B cell (primary cell): ENCODE measurements at regions of chr4 and their contacts with region 1.

Region 1: DNA sequence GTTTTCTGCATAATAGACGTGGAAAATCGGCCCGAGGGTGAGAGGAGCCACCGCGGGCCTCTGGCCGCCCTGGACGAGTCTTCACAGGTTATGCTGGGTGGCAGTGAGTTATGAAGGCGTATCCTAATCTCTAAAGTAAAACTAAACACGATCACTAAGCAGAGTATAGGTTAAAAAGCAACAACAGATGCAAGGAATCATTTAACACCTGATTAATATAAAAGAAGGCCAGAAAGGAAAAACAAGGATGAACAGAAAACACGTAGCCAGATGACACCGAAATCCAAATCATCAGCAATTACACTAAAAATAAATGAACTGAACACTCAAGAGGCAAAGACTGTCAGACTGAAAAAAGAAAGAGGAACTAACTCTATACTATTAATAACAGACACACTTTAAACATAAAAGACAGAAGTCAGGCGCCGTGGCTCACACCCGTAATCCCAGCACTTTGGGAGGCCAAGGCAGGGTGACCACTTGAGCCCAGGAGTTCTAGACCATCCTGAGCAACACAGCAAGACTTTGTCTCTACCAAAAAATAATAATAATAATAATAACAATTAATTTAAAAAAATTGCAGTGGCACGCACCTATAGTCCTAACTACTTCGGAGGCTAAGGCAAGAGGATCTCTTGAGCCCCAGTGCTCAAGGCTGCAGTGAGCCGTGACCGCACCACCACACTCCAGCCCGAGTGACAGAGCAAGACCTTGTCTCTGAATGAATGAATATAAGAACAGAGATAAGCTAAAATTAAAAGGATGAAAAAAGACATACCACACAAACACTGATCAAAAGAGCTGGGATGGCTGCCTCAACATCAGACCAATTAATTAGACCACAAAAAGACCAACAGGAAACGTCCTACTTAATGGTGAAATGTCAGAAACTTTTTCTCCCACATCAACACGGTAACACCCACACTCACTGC is 30.0 kb downstream of the CTBP1 start:
- DNase-seq: peak; percentile 68
- ATAC-seq: peak; percentile 83
- H3K4me3 ChIP-seq: peak overlapping the region in 4 of 5 experiments; percentile 23 to 60 (median 34)
- H3K4me3 Mint-ChIP-seq: peak overlapping the region; percentile 84
- H3K27ac ChIP-seq: peak overlapping the region; percentile 56 to 60
- H3K27ac Mint-ChIP-seq: peak overlapping the region; percentile 92
- H3K4me1 ChIP-seq: peaks cover 44 to 69% of the 10 kb centered on the region in 2 donors
- H3K4me1 Mint-ChIP-seq: peaks cover 62% of the 10 kb centered on the region
- H3K27me3 ChIP-seq: no peaks in the 10 kb centered on the region
- H3K27me3 Mint-ChIP-seq: no peaks in the 10 kb centered on the region
- CTCF ChIP-seq: no peak

Region 2: DNA sequence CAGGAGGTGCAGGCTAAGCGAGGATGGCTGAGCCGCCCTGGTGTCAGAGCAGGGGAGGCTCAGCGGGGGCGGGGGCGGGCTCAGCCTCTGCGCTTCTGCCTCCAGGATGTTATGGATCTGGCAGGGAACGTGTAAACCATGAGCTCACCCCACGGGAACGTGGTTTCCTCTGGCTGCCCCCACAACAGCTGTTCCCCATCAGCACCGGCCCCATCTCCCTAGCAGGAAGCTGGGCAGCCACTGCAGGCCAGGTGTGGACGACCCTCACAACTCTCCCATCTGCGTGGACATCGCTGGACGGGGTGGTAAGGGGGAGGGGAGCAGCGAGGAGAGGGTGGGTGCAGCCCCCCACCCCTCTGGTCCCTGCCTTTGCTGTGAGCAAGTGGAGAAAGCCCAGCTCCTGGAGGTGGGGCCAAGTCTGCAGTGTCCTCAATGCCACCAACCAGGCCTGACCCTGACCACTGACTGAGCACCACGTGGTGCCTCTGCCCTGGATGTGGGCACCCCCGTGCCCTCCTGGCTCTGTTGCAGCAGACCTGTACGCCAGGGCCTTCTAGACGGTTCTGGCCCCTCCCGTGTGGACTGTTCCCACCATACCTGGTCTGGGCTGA is 18.4 kb before region 1 on chr4:
- CTCF ChIA-PET with region 1: interaction called, 6 read pairs
- POLR2A ChIA-PET with region 1: no interaction called
- intact Hi-C with region 1: loop called (anchors 1 kb)
- DNase-seq: peak; percentile 22
- ATAC-seq: no peak
- H3K4me3 ChIP-seq: peak overlapping the region in 4 of 5 experiments; percentile 3 to 47 (median 32)
- H3K4me3 Mint-ChIP-seq: peak overlapping the region; percentile 86
- H3K27ac ChIP-seq: no peak overlapping the region
- H3K27ac Mint-ChIP-seq: no peak overlapping the region
- H3K4me1 ChIP-seq: peaks cover 32 to 51% of the 10 kb centered on the region in 2 donors
- H3K4me1 Mint-ChIP-seq: peaks cover 40% of the 10 kb centered on the region
- H3K27me3 ChIP-seq: peaks cover 0 to 4% (median 0%) of the 10 kb centered on the region in 4 experiments
- H3K27me3 Mint-ChIP-seq: no peaks in the 10 kb centered on the region
- CTCF ChIP-seq: no peak

Region 3: DNA sequence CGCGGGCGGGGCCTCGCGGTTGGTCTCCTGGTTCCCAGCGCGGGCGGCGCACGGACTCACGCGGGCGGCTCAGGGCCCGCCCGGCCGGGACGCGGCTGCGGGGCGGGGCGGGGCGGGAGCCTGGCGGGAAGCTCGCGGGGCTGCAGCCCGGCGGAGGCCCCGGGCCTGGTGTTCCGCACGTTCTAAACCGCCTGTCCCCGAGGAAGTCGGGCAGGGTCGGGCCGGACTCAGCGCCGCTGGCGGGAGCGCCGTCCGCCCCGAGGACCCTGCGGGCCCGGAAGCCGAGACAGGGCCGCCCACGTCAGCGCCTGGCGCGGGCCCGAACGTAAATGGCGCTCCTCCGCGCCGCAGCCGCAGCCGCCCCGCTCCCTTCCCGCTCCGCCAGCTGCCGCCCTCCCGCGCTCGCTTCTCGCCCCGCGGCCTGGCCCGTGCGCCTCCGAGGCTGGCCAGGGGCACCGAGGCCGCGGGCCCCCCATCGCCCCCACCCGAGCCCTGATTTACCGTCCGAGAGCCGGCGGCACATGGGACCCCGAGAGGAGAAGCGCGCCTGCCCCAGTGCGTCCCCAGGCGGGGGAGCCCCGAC is 30.3 kb after region 1 on chr4:
- CTCF ChIA-PET with region 1: no interaction called
- POLR2A ChIA-PET with region 1: no interaction called
- intact Hi-C with region 1: loop called (anchors 1 kb)
- DNase-seq: peak; percentile 95
- ATAC-seq: peak; percentile 73
- H3K4me3 ChIP-seq: peak overlapping the region; percentile 23 to 81 (median 62)
- H3K4me3 Mint-ChIP-seq: peak overlapping the region; percentile 92
- H3K27ac ChIP-seq: peak overlapping the region; percentile 84 to 85
- H3K27ac Mint-ChIP-seq: peak overlapping the region; percentile 97
- H3K4me1 ChIP-seq: peaks cover 47 to 57% of the 10 kb centered on the region in 2 donors
- H3K4me1 Mint-ChIP-seq: peaks cover 60% of the 10 kb centered on the region
- H3K27me3 ChIP-seq: no peaks in the 10 kb centered on the region
- H3K27me3 Mint-ChIP-seq: no peaks in the 10 kb centered on the region
- CTCF ChIP-seq: no peak

Region 4: DNA sequence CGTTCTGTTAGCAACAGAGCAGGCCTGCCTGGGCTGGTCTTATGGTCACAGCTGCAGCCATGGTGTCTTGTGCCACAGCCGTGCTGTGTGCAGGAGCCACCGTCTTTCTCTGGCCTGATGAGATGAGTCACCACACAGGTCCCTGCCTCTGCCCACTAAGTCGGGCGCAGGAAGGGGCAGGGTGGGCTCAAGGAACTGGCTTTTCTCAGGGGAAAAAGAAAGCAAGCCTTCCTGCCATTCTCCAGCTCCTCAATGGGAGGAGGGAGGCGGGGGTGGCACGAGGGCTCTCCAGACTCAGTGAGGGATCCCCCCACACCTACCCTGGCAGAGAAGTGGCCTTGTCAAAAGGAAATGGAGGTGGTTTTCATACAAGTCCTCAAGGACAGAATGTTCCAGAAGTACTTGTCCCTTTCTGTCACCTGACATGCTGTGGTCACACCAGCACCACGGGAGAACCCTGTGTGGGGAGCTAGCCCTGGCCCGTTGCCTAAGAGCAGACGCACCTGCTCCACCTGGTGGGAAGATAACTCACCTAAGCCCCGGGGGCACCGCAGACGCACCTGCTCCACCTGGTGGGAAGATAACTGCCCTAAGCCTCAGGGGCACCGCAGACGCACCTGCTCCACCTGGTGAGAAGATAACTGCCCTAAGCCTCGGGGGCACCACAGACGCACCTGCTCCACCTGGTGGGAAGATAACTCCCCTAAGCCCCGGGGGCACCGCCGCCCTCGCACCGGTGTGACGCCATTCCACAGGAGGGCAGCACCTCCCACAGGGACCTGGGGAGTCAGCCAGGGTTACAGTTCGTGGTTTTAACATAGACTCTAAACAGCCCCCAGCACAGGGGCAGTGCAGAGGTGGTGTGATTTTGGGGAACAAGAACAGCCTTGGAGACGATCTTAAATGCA is 146.6 kb after region 1 on chr4:
- CTCF ChIA-PET with region 1: no interaction called
- POLR2A ChIA-PET with region 1: no interaction called
- intact Hi-C with region 1: no loop called
- DNase-seq: no peak
- ATAC-seq: no peak
- H3K4me3 ChIP-seq: no peak overlapping the region
- H3K4me3 Mint-ChIP-seq: no peak overlapping the region
- H3K27ac ChIP-seq: no peak overlapping the region
- H3K27ac Mint-ChIP-seq: no peak overlapping the region
- H3K4me1 ChIP-seq: no peaks in the 10 kb centered on the region
- H3K4me1 Mint-ChIP-seq: no peaks in the 10 kb centered on the region
- H3K27me3 ChIP-seq: no peaks in the 10 kb centered on the region
- H3K27me3 Mint-ChIP-seq: no peaks in the 10 kb centered on the region
- CTCF ChIP-seq: no peak